K562 (cell line): ENCODE measurements at regions of chr7 and their contacts with region 1.

Region 1: GRCh38 chr7:141654551-141654950 is 47.4 kb downstream of the DENND11 start:
- DNase-seq: peak; percentile 59 to 78 (median 68)
- ATAC-seq: peak; percentile 96
- H3K4me3 ChIP-seq: no peak overlapping the region
- H3K27ac ChIP-seq: no peak overlapping the region
- H3K4me1 ChIP-seq: peaks cover 0 to 2% of the 10 kb centered on the region in 2 experiments; a peak in 1 of 5 replicates
- H3K27me3 ChIP-seq: no peaks in the 10 kb centered on the region
- CTCF ChIP-seq: peak; percentile 80 to 92 (median 88)
- EP300 ChIP-seq: no peak
- POLR2A ChIP-seq: no peak
- RAD21 ChIP-seq: peak; percentile 55 to 78

Region 2: DNA sequence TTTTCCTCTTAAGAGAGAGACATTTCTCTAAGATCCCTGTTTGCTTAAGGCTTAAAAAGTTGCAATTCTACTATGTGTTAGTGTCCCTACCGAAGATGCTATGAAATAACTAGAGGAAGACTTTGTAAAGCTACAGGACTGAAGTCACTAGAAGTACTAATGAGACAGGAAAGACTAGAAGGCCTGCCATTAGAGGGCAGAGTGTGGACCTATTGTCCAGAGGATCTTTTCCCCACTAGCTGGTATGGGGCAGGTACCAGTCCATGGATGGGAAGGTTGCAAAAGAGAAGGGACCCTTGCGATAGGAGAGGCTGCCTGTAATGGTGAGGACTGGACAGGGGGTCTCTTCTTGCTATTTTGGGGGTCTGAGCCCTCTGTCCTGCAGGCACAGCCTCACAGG is 402.6 kb before region 1 on chr7:
- CTCF ChIA-PET with region 1: no interaction called
- POLR2A ChIA-PET with region 1: no interaction called
- in situ Hi-C with region 1: no loop called
- intact Hi-C with region 1: loop called (anchors 10 kb)
- DNase-seq: no peak
- ATAC-seq: peak; percentile 60; the same call in 2 of the 3 replicates
- H3K4me3 ChIP-seq: no peak overlapping the region
- H3K27ac ChIP-seq: no peak overlapping the region
- H3K4me1 ChIP-seq: no peaks in the 10 kb centered on the region
- H3K27me3 ChIP-seq: no peaks in the 10 kb centered on the region; a peak in 1 of 5 replicates
- CTCF ChIP-seq: 0 out of 6 replicates have a peak, but pooled peaks of 1 of the 3 experiments have one; percentile 10
- EP300 ChIP-seq: no peak
- POLR2A ChIP-seq: no peak
- RAD21 ChIP-seq: no peak

Region 3: DNA sequence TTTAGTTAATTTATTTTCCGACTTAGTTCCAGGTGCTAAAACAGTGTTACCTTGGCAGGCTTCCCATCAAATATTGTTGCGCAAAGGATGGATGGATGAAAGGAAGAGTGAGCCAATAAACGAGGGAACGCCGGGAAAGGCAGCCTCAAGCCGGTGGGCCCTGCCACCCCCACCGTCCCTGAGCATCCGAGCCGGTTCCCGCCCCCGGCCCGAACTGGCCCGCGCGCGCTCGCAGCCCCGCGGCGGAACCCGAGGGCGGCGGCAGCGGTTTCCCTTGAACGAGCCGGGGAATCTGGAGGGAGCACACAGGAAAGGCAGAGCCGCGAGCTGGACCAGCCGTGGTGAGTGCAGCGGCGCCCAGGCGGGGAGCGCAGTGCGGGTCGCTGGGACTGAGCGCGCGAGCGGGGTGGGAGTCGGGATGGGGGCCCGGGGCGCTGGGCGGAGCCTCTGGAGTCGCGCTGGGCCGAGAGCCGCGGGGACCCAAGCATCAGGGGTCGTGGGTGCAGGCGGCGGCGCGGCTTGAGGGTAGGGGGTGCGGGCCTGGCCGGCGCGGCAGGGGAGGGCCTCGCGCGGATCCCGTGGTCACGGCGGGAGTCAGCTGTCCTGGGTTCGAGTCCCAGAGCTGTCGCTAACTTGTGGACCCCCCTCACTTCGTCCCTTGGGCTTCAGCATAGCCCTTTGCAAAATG is 103.3 kb before region 1 on chr7 and contains the start of gene AGK:
- CTCF ChIA-PET with region 1: no interaction called
- POLR2A ChIA-PET with region 1: interaction called, 3 read pairs
- in situ Hi-C with region 1: no loop called
- intact Hi-C with region 1: loop called (anchors 5 kb)
- DNase-seq: peak; percentile 91 to 94 (median 92)
- ATAC-seq: peak; percentile 98
- H3K4me3 ChIP-seq: peak within 1 kb of the TSS; percentile 97
- H3K27ac ChIP-seq: peak within 1 kb of the TSS; percentile 61
- H3K4me1 ChIP-seq: peaks cover 8 to 12% of the 10 kb centered on the region in 2 experiments; a peak in 3 of 5 replicates
- H3K27me3 ChIP-seq: no peaks in the 10 kb centered on the region
- CTCF ChIP-seq: no peak
- EP300 ChIP-seq: 0 out of 2 replicates have a peak, but pooled peaks have one; percentile 34
- POLR2A ChIP-seq: peak; percentile 97
- RAD21 ChIP-seq: no peak
- polyA plus RNA-seq, gene AGK: 50.7 to 102 TPM

Region 4: GRCh38 chr7:141737834-141738591 is 83.5 kb after region 1 on chr7 and contains the start of gene SSBP1:
- CTCF ChIA-PET with region 1: interaction called, 7 read pairs
- POLR2A ChIA-PET with region 1: no interaction called
- in situ Hi-C with region 1: no loop called
- intact Hi-C with region 1: loop called (anchors 1 kb)
- DNase-seq: peak; percentile 85 to 99 (median 89)
- ATAC-seq: peak; percentile 89
- H3K4me3 ChIP-seq: peak within 1 kb of the TSS; percentile 65
- H3K27ac ChIP-seq: peak within 1 kb of the TSS; percentile 89
- H3K4me1 ChIP-seq: peaks cover 5 to 12% of the 10 kb centered on the region in 2 experiments; a peak in 4 of 5 replicates
- H3K27me3 ChIP-seq: no peaks in the 10 kb centered on the region
- CTCF ChIP-seq: peak; percentile 96 to 99 (median 98)
- EP300 ChIP-seq: peak; percentile 75
- POLR2A ChIP-seq: peak; percentile 99
- RAD21 ChIP-seq: peak; percentile 47 to 48
- polyA plus RNA-seq, gene SSBP1: 1,649 to 1,996 TPM